Stomach (tissue), 19 donors: ENCODE measurements at regions of chr5 and their contacts with region 1.

Region 1: GRCh38 chr5:50962934-50963872 is 296.8 kb downstream of the PARP8 start:
- DNase-seq: peak; percentile 88 to 94
- H3K4me3 ChIP-seq: peak overlapping the region; percentile 45 to 65 (median 63)
- H3K27ac ChIP-seq: peak overlapping the region; percentile 15 to 91 (median 91)
- H3K4me1 ChIP-seq: peaks cover 4 to 42% (median 28%) of the 10 kb centered on the region in 4 donors
- H3K27me3 ChIP-seq: peaks cover 0 to 46% (median 13%) of the 10 kb centered on the region in 3 donors
- CTCF ChIP-seq: peak in 6 of 7 experiments; percentile 62 to 99 (median 94)
- EP300 ChIP-seq: no peak
- POLR2A ChIP-seq: no peak

Region 2: GRCh38 chr5:51386916-51387883 is 424.0 kb after region 1 on chr5:
- intact Hi-C with region 1: loop called (anchors 5 kb)
- DNase-seq: peak; percentile 43 to 66
- H3K4me3 ChIP-seq: peak overlapping the region; percentile 68 to 81 (median 74)
- H3K27ac ChIP-seq: peak overlapping the region; percentile 72 to 97 (median 91)
- H3K4me1 ChIP-seq: peaks cover 28 to 51% (median 39%) of the 10 kb centered on the region in 4 donors
- H3K27me3 ChIP-seq: peaks cover 0 to 60% (median 7%) of the 10 kb centered on the region in 3 donors
- CTCF ChIP-seq: no peak
- EP300 ChIP-seq: no peak
- POLR2A ChIP-seq: no peak

Region 3: GRCh38 chr5:52007230-52007858 is 1044.1 kb after region 1 on chr5:
- intact Hi-C with region 1: loop called (anchors 5 kb)
- DNase-seq: peak in 1 of 2 donors; percentile 80
- H3K4me3 ChIP-seq: peak overlapping the region in 1 of 4 donors; percentile 19
- H3K27ac ChIP-seq: no peak overlapping the region
- H3K4me1 ChIP-seq: peaks cover 0 to 5% (median 0%) of the 10 kb centered on the region in 4 donors
- H3K27me3 ChIP-seq: no peaks in the 10 kb centered on the region
- CTCF ChIP-seq: peak in 5 of 7 experiments; percentile 45 to 76 (median 60)
- EP300 ChIP-seq: no peak
- POLR2A ChIP-seq: no peak

Region 4: GRCh38 chr5:52657247-52657645 is 1694.0 kb after region 1 on chr5:
- intact Hi-C with region 1: loop called (anchors 5 kb)
- DNase-seq: peak in 1 of 2 donors; percentile 72
- H3K4me3 ChIP-seq: no peak overlapping the region
- H3K27ac ChIP-seq: no peak overlapping the region
- H3K4me1 ChIP-seq: peaks cover 0 to 7% (median 2%) of the 10 kb centered on the region in 4 donors
- H3K27me3 ChIP-seq: no peaks in the 10 kb centered on the region
- CTCF ChIP-seq: peak in 4 of 7 experiments; percentile 23 to 55 (median 48)
- EP300 ChIP-seq: no peak
- POLR2A ChIP-seq: no peak